ENCODE measurements at regions of chr19 and their contacts with region 1.

Region 1: DNA sequence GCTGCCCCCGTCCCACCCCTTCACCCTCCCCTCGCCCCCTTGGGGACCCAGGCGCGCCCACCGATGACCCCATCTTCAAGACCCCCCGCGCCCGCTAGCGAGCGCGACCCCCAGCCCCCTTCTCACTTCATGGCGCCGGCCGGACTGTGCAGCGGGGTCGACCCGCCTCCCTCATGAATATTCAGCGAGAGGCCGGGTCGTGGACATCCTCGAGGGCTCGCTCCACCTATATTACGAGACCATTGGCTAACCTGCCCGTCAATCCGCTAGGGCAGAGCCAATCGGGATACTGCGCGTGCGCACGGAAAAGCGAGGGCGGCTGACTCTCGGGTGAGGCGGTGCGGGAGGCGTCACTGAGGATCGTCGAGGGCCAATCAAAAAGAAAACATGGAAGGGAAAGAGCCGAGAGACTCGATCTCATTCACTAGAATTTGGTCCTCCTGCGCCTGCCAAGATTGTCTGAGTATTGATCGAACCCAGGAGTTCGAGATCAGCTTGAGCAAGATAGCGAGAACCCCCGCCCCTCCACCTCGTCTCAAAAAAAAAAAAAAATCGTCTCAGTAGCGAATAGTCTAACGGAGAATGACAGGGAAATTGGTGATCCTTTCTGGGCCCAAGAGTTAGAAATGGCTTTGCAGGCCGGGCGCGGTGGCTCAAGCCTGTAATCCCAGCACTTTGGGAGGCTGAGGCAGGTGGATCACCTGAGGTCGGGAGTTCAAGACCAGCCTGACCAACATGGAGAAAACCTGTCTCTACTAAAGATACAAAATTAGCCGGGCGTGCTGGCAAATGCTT is at the start of gene ERCC2:
- DNase-seq: peak; percentile 99 to 100 (median 100)
- ATAC-seq: peak; percentile 99
- H3K4me3 ChIP-seq: peak within 1 kb of the TSS; percentile 78
- H3K27ac ChIP-seq: peak within 1 kb of the TSS; percentile 84
- H3K4me1 ChIP-seq: peaks cover 10 to 27% of the 10 kb centered on the region in 2 experiments
- H3K27me3 ChIP-seq: no peaks in the 10 kb centered on the region
- CTCF ChIP-seq: no peak
- EP300 ChIP-seq: no peak
- POLR2A ChIP-seq: peak; percentile 88
- RAD21 ChIP-seq: no peak
- polyA plus RNA-seq, gene ERCC2: 2.2 to 2.4 TPM

Region 2: GRCh38 chr19:45382426-45382825 is 11.8 kb after region 1 on chr19:
- CTCF ChIA-PET with region 1: no interaction called
- POLR2A ChIA-PET with region 1: interaction called, 14 read pairs
- in situ Hi-C with region 1: no loop called
- intact Hi-C with region 1: no loop called
- DNase-seq: peak in 1 of 4 experiments; percentile 3
- ATAC-seq: no peak
- H3K4me3 ChIP-seq: no peak overlapping the region
- H3K27ac ChIP-seq: no peak overlapping the region
- H3K4me1 ChIP-seq: peaks cover 0 to 18% of the 10 kb centered on the region in 2 experiments; a peak in 2 of 5 replicates
- H3K27me3 ChIP-seq: peaks cover 0 to 14% of the 10 kb centered on the region in 2 experiments; a peak in 3 of 5 replicates
- CTCF ChIP-seq: no peak
- EP300 ChIP-seq: no peak
- POLR2A ChIP-seq: no peak
- RAD21 ChIP-seq: no peak

Measured in K562 (cell line).